Astrocyte of the cerebellum (primary cell): ENCODE measurements at regions of chr22 and their contacts with region 1.

Region 1: GRCh38 chr22:29004647-29005371 is 56.8 kb downstream of the C22orf31 start:
- DNase-seq: peak; percentile 18
- H3K4me3 ChIP-seq: no peak overlapping the region
- CTCF ChIP-seq: no peak

Region 2: DNA sequence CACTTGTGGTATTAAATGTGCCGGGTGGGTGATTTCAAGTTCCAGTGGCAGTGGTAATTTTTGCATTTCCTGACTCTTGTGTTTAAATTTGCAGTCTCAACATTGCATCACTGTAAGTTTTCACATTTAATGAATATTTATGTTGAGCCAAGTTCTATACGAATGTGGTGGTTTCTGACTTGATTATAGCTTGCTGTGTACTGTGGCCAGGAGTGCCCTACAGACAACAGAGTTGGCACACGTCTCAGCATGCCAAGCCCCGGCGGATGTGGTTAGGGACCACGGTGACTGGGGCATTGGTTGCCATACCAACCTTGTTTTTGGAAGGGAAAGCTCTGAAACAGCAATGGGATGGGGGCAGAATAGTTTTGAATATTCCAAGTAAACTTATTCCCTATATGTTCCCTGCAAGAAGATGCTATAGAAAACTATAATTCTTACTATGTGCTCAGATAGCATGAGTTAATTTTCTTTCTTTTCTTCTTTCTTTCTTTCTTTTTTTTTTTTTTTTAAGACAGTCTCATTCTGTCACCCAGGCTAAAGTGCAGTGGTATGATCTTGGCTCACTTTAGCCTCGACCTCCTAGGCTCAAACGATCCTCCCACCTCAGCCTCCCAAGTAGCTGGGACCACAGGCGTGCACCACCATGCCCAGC is 105.5 kb before region 1 on chr22:
- in situ Hi-C with region 1: loop called (anchors 5 kb)
- DNase-seq: no peak
- H3K4me3 ChIP-seq: no peak overlapping the region
- CTCF ChIP-seq: no peak

Region 3: DNA sequence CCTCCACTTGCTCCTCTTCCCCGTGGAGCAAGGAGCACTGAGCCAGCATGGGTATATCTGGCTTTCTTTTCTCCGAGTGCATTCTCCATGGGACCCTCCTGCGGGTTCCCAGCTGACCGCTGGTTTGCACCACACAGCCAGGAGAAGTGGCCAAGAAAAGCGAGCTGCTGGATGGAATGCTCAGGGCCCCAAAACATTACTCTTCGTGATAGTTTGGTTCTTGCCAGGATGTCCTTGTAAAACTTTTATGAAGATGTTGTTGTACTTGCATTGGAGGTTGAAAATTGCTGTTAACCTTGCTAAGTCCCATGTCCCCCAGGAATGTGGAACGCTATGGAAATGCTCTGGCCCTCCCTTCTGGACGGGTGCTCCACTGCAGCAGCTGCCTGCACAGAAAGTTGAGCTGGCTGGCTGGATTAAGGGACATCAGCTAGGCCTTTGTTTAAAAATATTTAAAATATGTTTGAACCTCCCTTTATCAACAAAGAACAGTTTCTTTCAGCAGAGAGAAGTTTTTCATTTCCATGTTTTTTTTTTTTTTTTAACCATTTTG is 52.8 kb before region 1 on chr22:
- in situ Hi-C with region 1: no loop called
- DNase-seq: peak; percentile 90
- H3K4me3 ChIP-seq: no peak overlapping the region
- CTCF ChIP-seq: peak; percentile 49